ENCODE measurements at regions of chr15 and their contacts with region 1.

Region 1: DNA sequence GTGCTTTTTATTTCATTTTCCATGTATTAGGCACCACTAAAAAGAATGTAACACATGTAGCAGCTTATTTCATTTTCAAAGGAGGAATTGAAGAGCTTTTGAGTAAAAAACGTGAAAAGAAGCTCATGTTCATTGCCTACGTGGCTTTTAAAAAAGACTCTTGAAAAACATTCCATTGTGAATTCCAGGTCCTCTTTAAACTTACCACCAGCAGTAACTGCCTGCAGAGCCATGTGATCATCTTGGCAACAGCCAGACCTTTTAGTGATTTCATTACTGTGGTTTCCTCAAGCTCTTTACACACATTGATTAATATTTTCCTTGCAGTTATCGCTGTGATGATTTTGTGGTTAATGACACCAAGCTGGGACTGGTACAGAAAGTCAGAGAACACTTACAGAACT is 43.8 kb upstream of the FBXL22 start:
- DNase-seq: peak; percentile 24
- H3K4me3 Mint-ChIP-seq: no peak overlapping the region
- H3K27ac Mint-ChIP-seq: no peak overlapping the region
- H3K4me1 Mint-ChIP-seq: peaks cover 43% of the 10 kb centered on the region
- H3K27me3 Mint-ChIP-seq: no peaks in the 10 kb centered on the region

Region 2: GRCh38 chr15:63348392-63348791 is 205.0 kb before region 1 on chr15:
- CTCF ChIA-PET with region 1: no interaction called
- intact Hi-C with region 1: no loop called
- DNase-seq: no peak
- H3K4me3 Mint-ChIP-seq: no peak overlapping the region
- H3K27ac Mint-ChIP-seq: no peak overlapping the region
- H3K4me1 Mint-ChIP-seq: no peaks in the 10 kb centered on the region
- H3K27me3 Mint-ChIP-seq: no peaks in the 10 kb centered on the region

Region 3: DNA sequence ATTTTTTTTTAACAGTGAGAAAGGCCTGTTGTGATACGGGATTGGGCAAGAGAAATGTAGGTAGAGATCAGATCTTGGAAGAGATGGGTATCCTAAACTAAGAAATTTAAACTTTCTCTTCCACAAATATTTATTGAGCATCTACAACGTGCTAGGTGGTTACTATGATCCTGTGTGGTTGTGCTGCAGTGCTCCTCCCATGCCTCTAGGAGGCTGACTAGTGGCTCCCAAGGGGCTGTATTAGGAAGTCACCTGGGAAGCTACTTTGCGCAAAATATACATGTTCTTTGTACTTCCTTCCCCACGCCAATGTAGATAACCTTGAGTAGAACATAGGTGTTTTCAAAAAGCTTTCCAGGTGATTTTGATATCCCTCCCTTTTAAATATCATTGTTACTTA is 21.8 kb before region 1 on chr15:
- CTCF ChIA-PET with region 1: interaction called, 14 read pairs
- intact Hi-C with region 1: no loop called
- DNase-seq: no peak
- H3K4me3 Mint-ChIP-seq: no peak overlapping the region
- H3K27ac Mint-ChIP-seq: peak overlapping the region; percentile 69
- H3K4me1 Mint-ChIP-seq: peaks cover 86% of the 10 kb centered on the region
- H3K27me3 Mint-ChIP-seq: no peaks in the 10 kb centered on the region

Region 4: DNA sequence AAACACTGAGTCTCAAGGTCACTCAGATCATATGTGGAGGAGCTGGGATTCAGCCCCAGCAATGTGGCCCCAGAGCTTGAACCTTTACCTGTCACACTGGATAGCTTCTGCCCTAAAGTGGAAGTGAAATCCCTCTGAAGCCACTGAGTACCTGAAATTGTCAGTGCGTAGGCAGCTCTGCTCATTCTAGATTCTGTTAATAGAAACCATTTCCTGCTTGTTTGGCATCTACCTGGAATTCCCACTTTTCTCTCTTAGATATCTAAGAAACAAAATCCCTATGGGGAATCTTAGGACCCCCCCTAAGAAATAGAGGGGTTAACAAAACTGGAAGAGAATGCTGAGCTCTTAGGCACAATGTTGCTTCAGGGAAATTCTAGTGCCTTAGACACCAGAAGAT is 73.6 kb after region 1 on chr15:
- CTCF ChIA-PET with region 1: no interaction called
- intact Hi-C with region 1: no loop called
- DNase-seq: no peak
- H3K4me3 Mint-ChIP-seq: no peak overlapping the region
- H3K27ac Mint-ChIP-seq: peak overlapping the region; percentile 24
- H3K4me1 Mint-ChIP-seq: no peaks in the 10 kb centered on the region
- H3K27me3 Mint-ChIP-seq: no peaks in the 10 kb centered on the region

Region 5: DNA sequence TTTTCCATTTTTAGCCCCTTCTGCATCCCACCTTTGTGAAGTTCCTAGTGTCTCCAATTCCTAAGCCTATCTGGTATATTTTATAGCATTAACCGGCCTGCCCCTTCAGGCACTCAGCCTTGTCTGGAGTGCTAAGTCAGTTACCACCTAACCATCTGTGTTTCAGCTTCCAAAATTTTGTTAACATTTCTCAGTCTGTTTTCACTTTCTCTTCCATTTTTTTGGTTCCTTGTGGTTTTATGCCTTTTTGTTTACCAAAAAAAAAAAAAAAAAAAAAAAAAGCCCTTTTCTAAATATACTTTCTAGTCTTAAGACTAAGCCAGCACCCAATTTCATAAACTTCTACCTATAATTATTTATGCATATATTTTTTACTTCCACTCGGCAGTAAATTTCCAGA is 710.2 kb after region 1 on chr15:
- CTCF ChIA-PET with region 1: no interaction called
- intact Hi-C with region 1: no loop called
- DNase-seq: no peak
- H3K4me3 Mint-ChIP-seq: no peak overlapping the region
- H3K27ac Mint-ChIP-seq: no peak overlapping the region
- H3K4me1 Mint-ChIP-seq: peaks cover 52% of the 10 kb centered on the region
- H3K27me3 Mint-ChIP-seq: no peaks in the 10 kb centered on the region